ENCODE measurements at regions of chr4 and their contacts with region 1.

Region 1: GRCh38 chr4:165207431-165208220 is at the start of gene KLHL2:
- DNase-seq: peak; percentile 59 to 97 (median 78)

Region 2: GRCh38 chr4:164902608-164903007 is 305.0 kb before region 1 on chr4:
- intact Hi-C with region 1: no loop called
- DNase-seq: peak in 1 of 10 donors; percentile 63

Region 3: DNA sequence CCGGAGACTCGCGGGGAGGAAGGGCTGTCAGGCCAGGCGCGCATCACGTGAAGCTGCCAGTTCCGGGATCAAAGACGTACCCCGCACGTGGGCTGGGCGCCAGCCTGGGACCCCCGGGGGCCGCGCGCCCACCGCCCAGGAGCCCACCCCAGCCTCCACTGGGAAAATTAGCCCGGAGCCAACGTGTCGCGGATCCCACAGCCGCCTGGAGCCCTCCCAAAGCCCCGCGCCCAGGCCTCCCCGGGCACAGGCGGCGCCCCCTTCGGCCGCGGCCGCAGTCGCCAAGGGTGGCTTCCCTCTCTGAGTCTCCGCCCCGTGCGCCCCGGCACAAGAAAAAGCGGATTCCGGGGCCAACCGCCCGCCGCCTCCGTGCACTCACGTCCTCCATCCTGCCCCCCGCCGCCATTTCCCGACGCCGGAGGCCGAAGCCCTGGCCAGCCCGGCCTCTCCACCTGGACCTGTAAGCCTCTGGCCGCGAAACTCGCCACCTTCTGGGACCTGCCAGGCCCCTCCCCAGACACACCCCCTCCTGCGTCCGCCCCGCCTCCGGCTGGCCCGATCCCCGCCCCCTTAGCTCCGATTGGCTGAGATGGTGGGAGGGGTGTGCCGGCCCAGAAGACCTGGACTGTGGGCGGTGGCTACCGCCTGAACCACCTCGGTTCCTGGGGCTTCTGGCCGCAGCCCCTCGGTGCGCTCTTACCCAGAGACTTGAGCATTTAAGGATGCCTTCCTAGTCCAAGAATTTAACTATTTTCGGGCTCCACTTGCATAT is 95.1 kb before region 1 on chr4 and contains the start of gene TMEM192:
- intact Hi-C with region 1: loop called (anchors 1 kb)
- DNase-seq: peak; percentile 92 to 99 (median 96)

Region 4: GRCh38 chr4:165327211-165328100 is 119.8 kb after region 1 on chr4 and contains the start of gene MSMO1:
- intact Hi-C with region 1: loop called (anchors 2 kb)
- DNase-seq: peak; percentile 99 to 100 (median 100)

Region 5: GRCh38 chr4:165464813-165465381 is 257.3 kb after region 1 on chr4:
- intact Hi-C with region 1: loop called (anchors 10 kb)
- DNase-seq: no peak

Measured in posterior cingulate gyrus (tissue), 11 donors.